Left cardiac atrium (tissue), 4 donors: ENCODE measurements at regions of chr18 and their contacts with region 1.

Region 1: DNA sequence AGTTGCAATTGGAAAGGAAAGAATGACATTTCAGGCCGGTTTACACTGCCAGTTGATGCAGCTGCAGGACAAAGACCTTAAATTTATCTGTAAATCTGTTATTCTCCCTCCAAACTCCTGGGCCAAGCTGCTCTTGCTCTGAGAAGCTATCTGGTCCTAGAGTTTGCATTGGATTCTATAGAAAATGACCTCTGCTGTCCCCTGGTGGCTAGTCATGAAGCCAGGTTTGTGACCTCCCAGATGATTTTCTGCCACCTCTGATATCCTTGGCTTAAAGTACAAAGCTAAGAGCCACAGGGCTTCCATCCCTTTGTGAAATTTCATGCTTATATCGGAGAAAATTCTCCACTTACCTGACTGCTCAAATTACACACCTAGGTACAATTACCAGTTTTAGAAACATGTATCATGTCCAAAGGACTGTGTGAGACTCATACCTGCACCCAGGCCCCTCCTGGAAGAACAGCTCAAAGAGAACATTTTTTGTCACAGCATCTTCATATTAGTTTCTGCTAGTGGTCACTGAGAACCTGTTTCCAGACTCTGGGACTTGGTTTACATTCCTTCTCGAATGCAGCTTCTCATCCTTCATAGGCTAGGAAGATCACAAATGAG is 28.9 kb upstream of the IER3IP1 start:
- DNase-seq: no peak
- ATAC-seq: peak; percentile 47 to 67

Region 2: GRCh38 chr18:46910856-46911255 is 294.2 kb before region 1 on chr18:
- intact Hi-C with region 1: no loop called
- DNase-seq: no peak
- ATAC-seq: no peak

Region 3: GRCh38 chr18:47100214-47100831 is 104.7 kb before region 1 on chr18:
- intact Hi-C with region 1: loop called (anchors 2 to 5 kb)
- DNase-seq: peak; percentile 51
- ATAC-seq: peak; percentile 79 to 82